Caco-2 (cell line): ENCODE measurements at regions of chr20 and their contacts with region 1.

Region 1: GRCh38 chr20:35561268-35561667 is 19.4 kb downstream of the ERGIC3 start:
- DNase-seq: peak; percentile 75 to 79
- H3K4me3 ChIP-seq: no peak overlapping the region
- H3K4me3 Mint-ChIP-seq: no peak overlapping the region
- H3K27ac Mint-ChIP-seq: no peak overlapping the region
- H3K4me1 ChIP-seq: no peaks in the 10 kb centered on the region
- H3K4me1 Mint-ChIP-seq: peaks cover 4% of the 10 kb centered on the region
- H3K27me3 ChIP-seq: no peaks in the 10 kb centered on the region
- H3K27me3 Mint-ChIP-seq: no peaks in the 10 kb centered on the region
- CTCF ChIP-seq: peak; percentile 51 to 86

Region 2: GRCh38 chr20:35467339-35468224 is 93.7 kb before region 1 on chr20:
- CTCF ChIA-PET with region 1: no interaction called
- POLR2A ChIA-PET with region 1: no interaction called
- intact Hi-C with region 1: no loop called
- DNase-seq: peak; percentile 69 to 82
- H3K4me3 ChIP-seq: no peak overlapping the region
- H3K4me3 Mint-ChIP-seq: no peak overlapping the region
- H3K27ac Mint-ChIP-seq: peak overlapping the region; percentile 39
- H3K4me1 ChIP-seq: peaks cover 17% of the 10 kb centered on the region
- H3K4me1 Mint-ChIP-seq: peaks cover 12% of the 10 kb centered on the region
- H3K27me3 ChIP-seq: no peaks in the 10 kb centered on the region
- H3K27me3 Mint-ChIP-seq: no peaks in the 10 kb centered on the region
- CTCF ChIP-seq: no peak

Region 3: GRCh38 chr20:35601008-35601973 is 40.0 kb after region 1 on chr20:
- CTCF ChIA-PET with region 1: interaction called, 3 read pairs
- POLR2A ChIA-PET with region 1: no interaction called
- intact Hi-C with region 1: loop called (anchors 5 kb)
- DNase-seq: peak; percentile 90
- H3K4me3 ChIP-seq: peak overlapping the region; percentile 51
- H3K4me3 Mint-ChIP-seq: peak overlapping the region; percentile 68
- H3K27ac Mint-ChIP-seq: no peak overlapping the region
- H3K4me1 ChIP-seq: peaks cover 5% of the 10 kb centered on the region; the same call in 1 of the 2 replicates
- H3K4me1 Mint-ChIP-seq: no peaks in the 10 kb centered on the region
- H3K27me3 ChIP-seq: no peaks in the 10 kb centered on the region
- H3K27me3 Mint-ChIP-seq: peaks cover 10% of the 10 kb centered on the region
- CTCF ChIP-seq: peak; percentile 48 to 78

Region 4: GRCh38 chr20:35648836-35649235 is 87.6 kb after region 1 on chr20:
- CTCF ChIA-PET with region 1: no interaction called
- POLR2A ChIA-PET with region 1: no interaction called
- intact Hi-C with region 1: no loop called
- DNase-seq: no peak
- H3K4me3 ChIP-seq: no peak overlapping the region
- H3K4me3 Mint-ChIP-seq: no peak overlapping the region
- H3K27ac Mint-ChIP-seq: no peak overlapping the region
- H3K4me1 ChIP-seq: no peaks in the 10 kb centered on the region
- H3K4me1 Mint-ChIP-seq: peaks cover 6% of the 10 kb centered on the region
- H3K27me3 ChIP-seq: no peaks in the 10 kb centered on the region
- H3K27me3 Mint-ChIP-seq: no peaks in the 10 kb centered on the region
- CTCF ChIP-seq: no peak

Region 5: DNA sequence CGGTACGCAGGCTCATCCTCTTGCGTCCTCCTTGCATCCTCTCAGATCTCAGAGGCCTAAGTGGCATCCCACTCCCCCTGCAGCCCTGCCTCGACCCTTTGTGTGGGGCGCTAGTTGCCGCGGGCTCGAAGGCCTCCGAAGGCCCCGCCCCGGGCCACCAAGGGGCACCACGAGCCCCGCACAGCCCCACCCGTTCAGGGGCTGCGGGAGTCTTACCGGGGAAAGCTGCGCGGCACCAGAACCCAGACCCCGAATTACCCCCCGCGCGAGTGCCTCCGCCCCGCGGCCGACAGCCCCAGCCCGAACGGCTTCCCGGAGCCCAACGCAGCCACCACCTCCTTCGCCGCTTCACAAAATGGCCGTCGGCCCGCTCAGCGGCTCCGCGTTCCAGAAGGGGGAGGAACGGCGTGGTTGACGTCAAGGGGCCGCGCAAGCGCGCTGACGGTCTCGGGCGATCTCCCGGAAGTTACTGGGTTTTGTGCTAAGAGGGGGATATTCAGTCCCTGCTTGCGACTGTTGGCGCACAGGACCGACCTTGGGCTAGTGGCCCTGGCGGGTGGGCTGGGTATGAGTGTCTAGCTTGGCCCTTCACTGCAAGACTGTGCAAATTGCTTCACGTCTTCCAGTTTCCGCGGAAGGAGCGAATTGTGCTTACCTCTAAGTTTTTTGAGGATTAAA is 103.4 kb after region 1 on chr20 and contains the starts of genes CPNE1 and RBM12:
- CTCF ChIA-PET with region 1: no interaction called
- POLR2A ChIA-PET with region 1: no interaction called
- intact Hi-C with region 1: loop called (anchors 10 kb)
- DNase-seq: peak; percentile 99
- H3K4me3 ChIP-seq: peak within 1 kb of the TSS; percentile 87
- H3K4me3 Mint-ChIP-seq: peak within 1 kb of the TSS; percentile 84
- H3K27ac Mint-ChIP-seq: peak within 1 kb of the TSS; percentile 96
- H3K4me1 ChIP-seq: peaks cover 30% of the 10 kb centered on the region
- H3K4me1 Mint-ChIP-seq: peaks cover 22% of the 10 kb centered on the region
- H3K27me3 ChIP-seq: no peaks in the 10 kb centered on the region
- H3K27me3 Mint-ChIP-seq: no peaks in the 10 kb centered on the region
- CTCF ChIP-seq: no peak
- total RNA-seq, gene CPNE1: 815 and 833 TPM in 2 replicates
- total RNA-seq, gene RBM12: 146 and 147 TPM in 2 replicates

Region 6: DNA sequence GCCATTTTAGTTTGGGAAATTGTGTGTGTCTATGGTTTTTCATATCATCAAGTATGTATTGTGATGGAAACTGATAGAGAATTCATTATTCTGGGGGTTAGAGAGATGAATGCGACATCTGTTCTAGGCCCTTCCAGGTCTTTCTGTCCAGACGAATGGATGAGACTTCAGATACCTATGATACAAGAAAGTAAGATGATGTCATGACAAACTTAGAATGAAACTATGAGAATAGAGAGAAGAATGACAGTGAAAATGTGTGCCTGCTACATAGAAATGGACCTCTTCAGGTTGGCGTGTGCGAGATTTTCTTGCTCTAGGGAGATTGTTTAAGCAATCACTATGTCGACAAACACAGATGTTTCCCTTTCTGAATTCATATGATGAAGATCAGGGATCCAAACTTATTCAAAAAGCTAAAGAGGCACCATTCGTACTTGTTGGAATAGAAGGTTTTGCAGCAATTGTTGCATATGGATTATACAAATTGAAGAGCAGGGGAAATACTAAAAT is 316.9 kb after region 1 on chr20:
- CTCF ChIA-PET with region 1: no interaction called
- POLR2A ChIA-PET with region 1: no interaction called
- intact Hi-C with region 1: no loop called
- DNase-seq: no peak
- H3K4me3 ChIP-seq: no peak overlapping the region
- H3K4me3 Mint-ChIP-seq: no peak overlapping the region
- H3K27ac Mint-ChIP-seq: no peak overlapping the region
- H3K4me1 ChIP-seq: peaks cover 18% of the 10 kb centered on the region
- H3K4me1 Mint-ChIP-seq: peaks cover 17% of the 10 kb centered on the region
- H3K27me3 ChIP-seq: no peaks in the 10 kb centered on the region
- H3K27me3 Mint-ChIP-seq: no peaks in the 10 kb centered on the region
- CTCF ChIP-seq: no peak